ENCODE measurements at regions of chr7 and their contacts with region 1.

Region 1: GRCh38 chr7:46603780-46604179 is 682.7 kb upstream of the IGFBP3 start:
- DNase-seq: peak; percentile 93
- ATAC-seq: peak; percentile 86 to 89
- H3K4me3 ChIP-seq: no peak overlapping the region
- H3K27ac ChIP-seq: peak overlapping the region; percentile 72 to 90 (median 77)
- H3K4me1 ChIP-seq: peaks cover 23 to 32% of the 10 kb centered on the region in 2 donors
- H3K27me3 ChIP-seq: no peaks in the 10 kb centered on the region
- CTCF ChIP-seq: no peak
- POLR2A ChIP-seq: no peak

Region 2: DNA sequence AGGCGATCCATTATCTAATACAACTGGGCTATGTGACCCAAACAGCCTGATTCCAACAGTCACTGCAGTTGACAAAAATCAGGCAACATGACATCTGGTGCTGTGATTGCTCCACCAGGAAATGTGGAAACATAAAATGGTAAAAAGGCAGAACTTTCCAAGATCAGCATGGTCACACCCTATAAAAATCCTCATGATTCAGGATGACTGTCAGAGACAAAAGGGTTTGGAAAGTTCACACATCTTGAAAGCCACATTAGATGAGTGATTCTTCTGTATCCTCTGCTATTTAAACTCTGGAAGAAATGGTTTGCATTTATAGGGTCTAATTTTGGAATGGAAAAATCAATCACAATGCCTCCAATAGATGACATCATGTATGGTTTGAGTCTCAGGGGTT is 20.1 kb before region 1 on chr7:
- in situ Hi-C with region 1: no loop called
- intact Hi-C with region 1: loop called (anchors 2 kb)
- DNase-seq: peak in 1 of 2 donors; percentile 36
- ATAC-seq: peak; percentile 89 to 94
- H3K4me3 ChIP-seq: no peak overlapping the region
- H3K27ac ChIP-seq: peak overlapping the region in 3 of 4 donors; percentile 24 to 46 (median 30)
- H3K4me1 ChIP-seq: no peaks in the 10 kb centered on the region
- H3K27me3 ChIP-seq: no peaks in the 10 kb centered on the region
- CTCF ChIP-seq: no peak
- POLR2A ChIP-seq: no peak

Region 3: GRCh38 chr7:46776790-46777189 is 173.0 kb after region 1 on chr7:
- in situ Hi-C with region 1: no loop called
- intact Hi-C with region 1: loop called (anchors 5 kb)
- DNase-seq: no peak
- ATAC-seq: no peak
- H3K4me3 ChIP-seq: no peak overlapping the region
- H3K27ac ChIP-seq: no peak overlapping the region
- H3K4me1 ChIP-seq: peaks cover 18 to 42% of the 10 kb centered on the region in 2 donors
- H3K27me3 ChIP-seq: no peaks in the 10 kb centered on the region
- CTCF ChIP-seq: no peak
- POLR2A ChIP-seq: no peak

Region 4: GRCh38 chr7:46932676-46933424 is 329.1 kb after region 1 on chr7:
- in situ Hi-C with region 1: no loop called
- intact Hi-C with region 1: loop called (anchors 5 kb)
- DNase-seq: peak; percentile 32 to 35
- ATAC-seq: peak; percentile 78 to 83
- H3K4me3 ChIP-seq: no peak overlapping the region
- H3K27ac ChIP-seq: peak overlapping the region; percentile 41 to 63 (median 56)
- H3K4me1 ChIP-seq: peaks cover 6 to 14% of the 10 kb centered on the region in 2 donors
- H3K27me3 ChIP-seq: no peaks in the 10 kb centered on the region
- CTCF ChIP-seq: no peak
- POLR2A ChIP-seq: no peak